ENCODE measurements at regions of chr10 and their contacts with region 1.

Region 1: DNA sequence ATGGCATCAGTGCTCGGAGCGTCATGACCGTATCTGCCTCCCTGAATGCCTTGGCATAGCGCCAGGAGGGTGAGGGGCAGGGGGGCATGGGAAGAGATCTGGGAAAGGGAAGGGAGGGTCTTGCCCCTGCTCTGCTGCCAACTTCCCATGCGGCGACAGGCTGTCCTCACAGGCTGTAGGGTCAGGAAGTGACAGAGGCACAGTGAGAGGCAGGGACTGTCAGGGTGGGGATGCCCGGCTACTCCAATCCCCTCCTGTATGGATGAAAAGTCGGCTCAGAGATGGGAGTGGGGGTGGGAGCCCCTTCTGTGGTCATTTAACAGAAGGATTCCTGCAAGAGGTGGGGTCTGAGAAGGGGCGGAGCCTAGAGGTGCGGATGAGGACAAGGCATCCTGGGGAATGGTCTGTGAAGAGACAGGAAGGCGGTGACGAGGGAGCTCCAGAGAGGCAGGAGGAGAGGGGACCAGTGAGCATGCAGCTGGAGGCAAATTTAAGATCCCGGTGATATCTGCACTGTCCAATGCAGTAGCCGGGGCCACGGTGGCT is 20.8 kb upstream of the UNC5B start:
- DNase-seq: no peak
- ATAC-seq: no peak
- H3K4me3 ChIP-seq: no peak overlapping the region
- H3K27ac ChIP-seq: no peak overlapping the region
- H3K4me1 ChIP-seq: no peaks in the 10 kb centered on the region
- H3K27me3 ChIP-seq: peaks cover 0 to 11% of the 10 kb centered on the region in 2 donors
- CTCF ChIP-seq: no peak

Region 2: DNA sequence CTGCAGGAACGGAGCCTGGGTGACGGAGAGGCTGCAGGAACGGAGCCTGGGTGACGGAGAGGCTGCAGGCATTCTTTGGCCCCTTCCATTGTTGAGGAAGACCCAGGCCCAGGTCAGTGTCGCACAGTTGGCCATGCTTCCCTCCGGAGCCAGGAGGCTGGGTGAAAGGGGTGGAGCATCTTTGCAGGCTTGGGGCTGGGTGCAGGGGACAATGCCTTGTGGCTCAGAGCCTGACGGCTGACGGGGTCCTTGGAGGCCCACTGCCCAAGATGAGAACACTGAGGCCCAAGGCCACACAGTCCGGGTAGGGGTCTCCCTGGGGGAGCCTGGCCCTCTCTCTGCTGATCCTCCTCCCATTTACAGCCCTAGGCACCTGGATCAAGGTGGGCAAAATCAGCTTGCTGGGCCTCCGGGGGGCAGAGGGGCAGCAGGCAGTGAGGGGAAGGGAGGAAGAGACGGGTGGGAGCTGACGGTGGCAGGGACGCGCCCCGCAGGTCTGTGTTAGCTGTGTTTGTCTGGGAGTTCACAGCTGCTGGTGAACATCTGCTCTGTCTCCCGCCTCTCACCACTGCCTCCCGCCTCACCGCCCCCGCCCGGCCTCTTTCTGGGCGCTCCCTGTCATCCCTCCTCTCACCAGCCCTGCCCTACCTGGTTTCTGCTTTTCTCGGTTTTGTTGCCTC is 272.6 kb before region 1 on chr10:
- intact Hi-C with region 1: no loop called
- DNase-seq: peak in 1 of 4 donors; percentile 66
- ATAC-seq: no peak
- H3K4me3 ChIP-seq: no peak overlapping the region
- H3K27ac ChIP-seq: no peak overlapping the region
- H3K4me1 ChIP-seq: no peaks in the 10 kb centered on the region
- H3K27me3 ChIP-seq: peaks cover 0 to 13% of the 10 kb centered on the region in 2 donors
- CTCF ChIP-seq: no peak

Region 3: DNA sequence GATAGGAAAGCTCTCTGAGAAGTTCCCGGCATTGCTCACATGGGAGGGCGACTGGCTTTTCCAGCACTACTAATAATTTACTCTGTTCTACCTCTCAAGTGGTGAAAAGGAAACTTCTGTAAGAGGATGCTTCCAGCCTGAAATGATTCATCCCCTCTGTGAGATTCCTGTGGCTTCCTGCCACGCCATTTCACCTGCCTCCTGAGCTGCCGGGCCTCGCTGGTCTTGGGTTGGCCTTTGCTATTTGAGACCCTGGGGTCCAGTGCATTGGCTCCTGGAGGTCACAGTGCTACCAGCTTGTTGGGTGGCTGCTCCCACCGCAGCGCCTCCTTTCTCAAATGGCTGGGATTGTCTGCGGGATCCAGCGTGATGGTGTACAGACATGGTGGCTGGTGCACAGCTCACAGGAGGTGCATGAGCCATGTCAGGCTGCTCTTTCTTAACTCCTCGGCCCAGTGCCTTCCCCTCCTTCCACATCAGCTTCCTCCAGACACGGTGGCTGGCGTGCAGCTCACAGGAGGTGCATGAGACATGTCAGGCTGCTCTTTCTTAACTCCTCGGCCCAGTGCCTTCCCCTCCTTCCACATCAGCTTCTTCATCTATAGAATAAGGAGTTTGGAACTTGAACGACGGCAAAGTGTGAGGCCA is 260.3 kb before region 1 on chr10:
- intact Hi-C with region 1: loop called in 1 of 2 experiments (anchors 10 kb)
- DNase-seq: peak in 1 of 4 donors; percentile 55
- ATAC-seq: peak; percentile 52
- H3K4me3 ChIP-seq: no peak overlapping the region
- H3K27ac ChIP-seq: no peak overlapping the region
- H3K4me1 ChIP-seq: no peaks in the 10 kb centered on the region
- H3K27me3 ChIP-seq: peaks cover 0 to 12% of the 10 kb centered on the region in 2 donors
- CTCF ChIP-seq: no peak

Region 4: GRCh38 chr10:71103961-71104360 is 87.6 kb before region 1 on chr10:
- intact Hi-C with region 1: no loop called
- DNase-seq: no peak
- ATAC-seq: no peak
- H3K4me3 ChIP-seq: no peak overlapping the region
- H3K27ac ChIP-seq: no peak overlapping the region
- H3K4me1 ChIP-seq: no peaks in the 10 kb centered on the region
- H3K27me3 ChIP-seq: no peaks in the 10 kb centered on the region
- CTCF ChIP-seq: no peak

Region 5: DNA sequence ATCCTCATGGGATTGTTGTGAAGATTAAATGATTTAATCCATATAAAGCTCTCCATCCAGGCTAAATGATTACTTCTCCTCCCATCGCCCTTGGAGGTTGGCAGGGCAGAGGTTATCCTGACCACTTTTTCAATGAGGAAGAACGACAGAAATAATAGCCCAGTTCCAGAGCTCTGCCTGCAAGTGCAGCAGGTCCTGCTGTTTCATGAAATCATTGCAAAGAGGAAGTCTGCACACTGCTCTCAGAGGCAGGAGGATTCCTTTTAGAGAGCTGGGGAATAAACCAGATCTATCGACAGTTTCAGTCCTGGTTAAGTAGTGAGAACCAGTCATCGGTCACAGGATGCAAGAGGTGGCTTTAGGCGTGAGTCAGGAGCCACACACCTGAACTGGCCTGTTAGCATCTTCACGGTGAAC is 180.2 kb after region 1 on chr10:
- intact Hi-C with region 1: no loop called
- DNase-seq: no peak
- ATAC-seq: peak; percentile 56
- H3K4me3 ChIP-seq: no peak overlapping the region
- H3K27ac ChIP-seq: peak overlapping the region; percentile 7 to 78
- H3K4me1 ChIP-seq: peaks cover 0 to 33% of the 10 kb centered on the region in 2 donors
- H3K27me3 ChIP-seq: no peaks in the 10 kb centered on the region
- CTCF ChIP-seq: no peak